Gastrocnemius medialis (tissue), 4 donors: ENCODE measurements at regions of chr16 and their contacts with region 1.

Region 1: DNA sequence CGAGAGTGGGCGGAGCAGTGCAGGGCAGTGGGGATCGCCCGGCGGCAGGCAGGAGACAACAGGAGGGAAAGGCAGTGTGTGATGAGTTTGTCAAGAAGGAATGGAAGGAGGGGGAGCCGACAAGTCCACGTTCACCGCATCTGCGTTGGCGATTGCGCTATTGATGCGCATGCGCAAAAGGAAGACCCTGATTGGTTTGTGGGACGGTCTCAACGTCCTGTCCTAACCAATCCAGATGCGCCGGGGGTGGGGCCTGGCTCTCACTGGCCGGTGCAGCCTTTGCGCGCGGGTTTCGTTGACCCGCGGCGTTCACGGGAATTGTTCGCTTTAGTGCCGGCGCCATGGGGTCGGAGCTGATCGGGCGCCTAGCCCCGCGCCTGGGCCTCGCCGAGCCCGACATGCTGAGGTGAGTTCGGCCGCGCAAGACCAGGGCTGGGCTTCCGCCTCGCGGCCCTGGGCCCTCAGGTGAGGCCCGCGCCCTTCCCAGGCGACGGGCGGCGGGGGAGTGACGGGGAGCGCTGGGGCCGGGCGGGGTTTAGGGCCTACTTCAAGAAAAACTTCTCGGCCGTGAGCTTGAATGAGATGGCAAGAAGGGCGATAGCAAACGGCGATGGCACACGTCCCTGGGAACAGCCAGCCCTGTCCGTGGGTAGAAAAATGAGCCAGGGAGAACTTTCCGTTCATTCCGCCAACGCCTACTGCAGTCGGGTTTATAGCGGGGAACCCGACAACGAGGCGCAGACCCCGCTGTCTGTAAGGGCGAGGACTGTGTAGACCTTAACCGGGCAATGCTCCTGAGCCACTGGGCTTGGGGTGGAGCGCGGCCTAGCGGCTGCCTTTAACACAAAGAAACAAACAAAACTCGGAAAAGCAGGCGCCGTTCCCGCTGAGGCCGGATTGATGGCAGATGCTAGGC is at the start of gene ORC6:
- DNase-seq: peak; percentile 97
- ATAC-seq: peak; percentile 88 to 89
- H3K4me3 ChIP-seq: peak within 1 kb of the TSS; percentile 86 to 97 (median 92)
- H3K27ac ChIP-seq: peak within 1 kb of the TSS; percentile 91 to 97 (median 96)
- H3K4me1 ChIP-seq: peaks cover 30 to 32% of the 10 kb centered on the region in 2 donors
- H3K27me3 ChIP-seq: no peaks in the 10 kb centered on the region
- CTCF ChIP-seq: peak in 1 of 5 experiments; percentile 7
- POLR2A ChIP-seq: no peak
- total RNA-seq, gene ORC6: 0.40 to 5.7 (median 1.2) TPM

Region 2: GRCh38 chr16:46621006-46621933 is 68.4 kb before region 1 on chr16 and contains the start of gene SHCBP1:
- in situ Hi-C with region 1: no loop called
- intact Hi-C with region 1: loop called (anchors 2 kb)
- DNase-seq: peak; percentile 69 to 70
- ATAC-seq: peak; percentile 79 to 83
- H3K4me3 ChIP-seq: peak within 1 kb of the TSS; percentile 58 to 73 (median 60)
- H3K27ac ChIP-seq: no peak within 1 kb of the TSS
- H3K4me1 ChIP-seq: peaks cover 0 to 12% of the 10 kb centered on the region in 2 donors
- H3K27me3 ChIP-seq: no peaks in the 10 kb centered on the region
- CTCF ChIP-seq: no peak
- POLR2A ChIP-seq: no peak
- total RNA-seq, gene SHCBP1: 0.13 to 1.3 TPM in 2 of 4 donors, not detected in the others

Region 3: GRCh38 chr16:46649928-46650623 is 39.5 kb before region 1 on chr16:
- in situ Hi-C with region 1: no loop called
- intact Hi-C with region 1: loop called (anchors 2 kb)
- DNase-seq: peak; percentile 41 to 74
- ATAC-seq: peak; percentile 88 to 89
- H3K4me3 ChIP-seq: peak overlapping the region; percentile 43 to 56 (median 47)
- H3K27ac ChIP-seq: peak overlapping the region; percentile 86 to 94 (median 90)
- H3K4me1 ChIP-seq: peaks cover 4 to 6% of the 10 kb centered on the region in 2 donors
- H3K27me3 ChIP-seq: no peaks in the 10 kb centered on the region
- CTCF ChIP-seq: no peak
- POLR2A ChIP-seq: no peak

Region 4: GRCh38 chr16:46801428-46802049 is 111.9 kb after region 1 on chr16:
- in situ Hi-C with region 1: no loop called
- intact Hi-C with region 1: loop called (anchors 1 kb)
- DNase-seq: no peak
- ATAC-seq: peak in 1 of 2 donors; percentile 68
- H3K4me3 ChIP-seq: no peak overlapping the region
- H3K27ac ChIP-seq: no peak overlapping the region
- H3K4me1 ChIP-seq: peaks cover 0 to 3% of the 10 kb centered on the region in 2 donors
- H3K27me3 ChIP-seq: no peaks in the 10 kb centered on the region
- CTCF ChIP-seq: peak in 4 of 5 experiments; percentile 37 to 49 (median 48)
- POLR2A ChIP-seq: no peak

Region 5: GRCh38 chr16:46830902-46831647 is 141.5 kb after region 1 on chr16 and contains the start of gene C16orf87:
- in situ Hi-C with region 1: no loop called
- intact Hi-C with region 1: loop called (anchors 1 kb)
- DNase-seq: peak; percentile 88 to 92
- ATAC-seq: peak; percentile 89 to 93
- H3K4me3 ChIP-seq: peak within 1 kb of the TSS; percentile 69 to 93 (median 86)
- H3K27ac ChIP-seq: peak within 1 kb of the TSS; percentile 90 to 98 (median 95)
- H3K4me1 ChIP-seq: peaks cover 10 to 16% of the 10 kb centered on the region in 2 donors
- H3K27me3 ChIP-seq: no peaks in the 10 kb centered on the region
- CTCF ChIP-seq: peak in 1 of 5 experiments; percentile 15
- POLR2A ChIP-seq: peak; percentile 77 to 79
- total RNA-seq, gene C16orf87: 13.5 to 22.4 (median 20.3) TPM